Activated CD4-positive, alpha-beta T cell treated with anti-CD3 and anti-CD28 coated beads for 36 hours (primary cell): ENCODE measurements at regions of chr2 and their contacts with region 1.

Region 1: DNA sequence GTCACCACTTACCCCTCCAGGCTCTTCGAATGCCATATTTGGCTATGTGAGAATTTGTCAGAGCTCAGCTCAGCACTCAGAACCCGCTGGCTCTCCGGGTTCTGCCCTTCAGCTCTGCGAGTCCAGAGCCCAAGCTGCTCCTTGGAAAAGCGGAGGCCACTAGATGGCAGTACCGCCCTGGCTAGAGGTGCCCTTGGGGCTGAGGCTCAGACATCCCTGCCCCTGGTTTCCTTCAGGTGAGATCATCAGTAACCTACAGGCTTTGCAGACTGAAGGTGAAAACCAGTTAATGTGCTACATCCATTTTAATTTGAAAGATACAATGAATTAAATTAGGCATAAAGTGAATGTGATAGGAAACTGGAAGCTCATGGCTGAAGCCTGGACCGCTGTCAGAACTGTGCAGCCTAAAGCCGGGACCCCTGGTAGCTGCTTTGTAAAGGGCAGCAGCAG is 285.6 kb downstream of the AGAP1 start:
- DNase-seq: peak; percentile 84
- ATAC-seq: peak; percentile 87
- H3K4me3 Mint-ChIP-seq: no peak overlapping the region
- H3K27ac Mint-ChIP-seq: no peak overlapping the region
- H3K4me1 Mint-ChIP-seq: no peaks in the 10 kb centered on the region
- H3K27me3 Mint-ChIP-seq: peaks cover 22% of the 10 kb centered on the region

Region 2: GRCh38 chr2:235766278-235766677 is 13.2 kb before region 1 on chr2:
- CTCF ChIA-PET with region 1: interaction called, 15 read pairs
- POLR2A ChIA-PET with region 1: no interaction called
- intact Hi-C with region 1: no loop called
- DNase-seq: peak; percentile 70
- ATAC-seq: peak; percentile 83
- H3K4me3 Mint-ChIP-seq: no peak overlapping the region
- H3K27ac Mint-ChIP-seq: no peak overlapping the region
- H3K4me1 Mint-ChIP-seq: no peaks in the 10 kb centered on the region
- H3K27me3 Mint-ChIP-seq: peaks cover 5% of the 10 kb centered on the region

Region 3: DNA sequence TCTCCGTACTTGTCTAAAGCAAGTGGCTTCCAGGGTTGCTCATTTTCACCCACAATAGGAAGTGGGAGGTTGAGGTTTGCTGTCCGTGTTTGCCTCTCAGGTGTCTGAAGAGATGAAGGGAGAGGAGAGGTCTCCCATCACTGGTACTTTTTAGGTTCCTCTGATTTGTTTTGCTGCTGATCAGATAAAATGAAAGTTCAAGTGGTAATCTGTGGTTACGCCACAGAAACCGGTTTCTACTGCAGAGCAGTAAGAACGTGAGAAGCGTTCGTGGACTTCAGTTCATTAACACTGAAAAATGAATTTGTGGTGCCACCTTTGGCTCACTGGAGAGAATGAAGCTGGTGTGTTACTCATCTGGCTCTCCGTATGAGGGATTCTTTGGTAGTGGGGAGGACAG is 270.5 kb after region 1 on chr2:
- CTCF ChIA-PET with region 1: no interaction called
- POLR2A ChIA-PET with region 1: no interaction called
- intact Hi-C with region 1: loop called in 1 of 2 experiments (anchors 5 kb)
- DNase-seq: peak; percentile 40
- ATAC-seq: peak; percentile 85
- H3K4me3 Mint-ChIP-seq: no peak overlapping the region
- H3K27ac Mint-ChIP-seq: no peak overlapping the region
- H3K4me1 Mint-ChIP-seq: peaks cover 9% of the 10 kb centered on the region
- H3K27me3 Mint-ChIP-seq: peaks cover 31% of the 10 kb centered on the region